ENCODE measurements at regions of chr2 and their contacts with region 1.

Region 1: DNA sequence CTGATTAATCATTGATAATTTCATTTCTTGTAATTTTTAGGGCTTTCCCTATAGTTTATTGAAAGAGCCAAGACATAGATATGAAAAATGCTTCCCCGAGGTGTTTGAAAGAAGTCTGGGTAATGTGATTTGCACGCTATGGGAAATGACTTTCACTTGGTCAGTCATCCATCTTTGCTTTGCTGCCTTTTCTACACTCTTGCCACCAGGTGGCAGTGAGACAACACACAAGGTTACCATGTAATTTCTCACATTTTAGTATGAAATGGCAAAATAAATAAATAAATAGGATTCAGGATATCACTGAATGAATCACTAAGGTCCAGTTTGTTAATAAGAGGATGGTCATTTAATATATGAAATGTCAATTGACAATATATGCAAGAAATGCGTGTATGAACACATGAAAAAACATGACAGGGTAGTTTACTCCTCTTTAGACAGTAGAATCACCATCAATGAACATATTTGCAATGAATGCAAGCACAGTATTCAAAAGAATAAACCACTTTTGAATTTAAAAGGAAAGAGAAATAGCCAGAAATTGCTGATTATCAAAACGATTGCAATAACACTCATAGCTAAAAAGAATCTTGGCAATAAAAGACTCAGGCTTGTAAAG is 52.2 kb upstream of the KCNH7 start:
- DNase-seq: no peak
- H3K4me3 ChIP-seq: no peak overlapping the region
- H3K27ac ChIP-seq: no peak overlapping the region
- H3K4me1 ChIP-seq: no peaks in the 10 kb centered on the region
- H3K27me3 ChIP-seq: no peaks in the 10 kb centered on the region
- CTCF ChIP-seq: peak in 2 of 3 experiments; percentile 67 to 77; a peak in 3 of 4 replicates
- EP300 ChIP-seq: no peak
- POLR2A ChIP-seq: no peak
- RAD21 ChIP-seq: peak; percentile 88 to 89

Region 2: GRCh38 chr2:162972383-162972782 is 81.6 kb after region 1 on chr2:
- CTCF ChIA-PET with region 1: no interaction called
- POLR2A ChIA-PET with region 1: no interaction called
- DNase-seq: no peak
- H3K4me3 ChIP-seq: no peak overlapping the region
- H3K27ac ChIP-seq: no peak overlapping the region
- H3K4me1 ChIP-seq: no peaks in the 10 kb centered on the region
- H3K27me3 ChIP-seq: no peaks in the 10 kb centered on the region
- CTCF ChIP-seq: no peak
- EP300 ChIP-seq: no peak
- POLR2A ChIP-seq: no peak
- RAD21 ChIP-seq: no peak

Region 3: GRCh38 chr2:163132850-163133249 is 242.0 kb after region 1 on chr2:
- CTCF ChIA-PET with region 1: interaction called, 15 read pairs
- POLR2A ChIA-PET with region 1: no interaction called
- DNase-seq: no peak
- H3K4me3 ChIP-seq: no peak overlapping the region
- H3K27ac ChIP-seq: no peak overlapping the region
- H3K4me1 ChIP-seq: no peaks in the 10 kb centered on the region
- H3K27me3 ChIP-seq: no peaks in the 10 kb centered on the region
- CTCF ChIP-seq: peak in 2 of 3 experiments; percentile 25 to 35; a peak in 2 of 4 replicates
- EP300 ChIP-seq: no peak
- POLR2A ChIP-seq: no peak
- RAD21 ChIP-seq: peak in 1 of 2 experiments; percentile 71

Measured in H1 (cell line).